SK-N-SH (cell line): ENCODE measurements at regions of chr20 and their contacts with region 1.

Region 1: DNA sequence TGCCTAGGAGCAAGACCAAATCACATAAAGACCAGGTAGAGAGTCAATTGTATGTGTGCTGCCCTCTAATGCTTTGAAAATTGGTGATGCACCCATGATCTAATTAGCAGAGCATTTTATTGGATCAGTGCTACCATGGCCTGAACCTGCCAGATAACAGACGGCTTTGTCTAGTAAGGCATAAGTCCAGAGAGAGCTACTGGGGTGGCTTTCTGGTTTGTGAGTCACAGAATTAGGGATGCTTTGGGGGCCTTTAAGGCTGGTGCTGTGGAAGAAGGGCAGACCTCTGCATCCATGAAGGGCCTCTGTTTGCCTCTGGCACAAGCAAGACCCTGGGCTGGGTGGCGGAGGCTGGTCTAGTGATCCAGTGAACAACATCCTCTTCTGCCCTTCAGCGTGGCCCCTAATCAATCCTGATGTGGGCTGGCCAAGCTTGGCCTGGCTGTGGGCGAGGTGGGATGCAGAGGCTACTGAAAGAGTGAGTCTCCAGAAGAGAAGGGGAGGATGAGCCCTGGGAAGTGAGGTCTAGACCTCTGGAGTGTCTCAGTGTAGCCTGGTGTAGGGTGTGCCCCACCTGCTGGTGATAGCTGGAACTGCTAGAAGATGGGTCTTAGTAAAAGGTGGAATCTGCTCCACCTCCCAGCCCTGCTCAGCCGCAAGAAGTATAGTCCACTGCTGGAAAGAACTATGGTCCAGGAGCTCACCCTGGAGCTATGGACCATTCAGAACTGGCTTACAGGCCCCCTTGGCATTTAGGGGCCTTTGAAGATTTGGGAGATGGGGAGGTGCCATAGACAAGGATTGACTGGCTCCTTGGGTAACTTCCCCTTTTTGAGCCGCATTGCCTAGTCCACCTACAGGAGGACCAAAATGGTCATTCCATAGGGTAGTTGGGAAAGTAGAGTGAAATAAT is 36.7 kb upstream of the AAR2 start:
- DNase-seq: peak; percentile 86
- H3K4me3 ChIP-seq: peak overlapping the region in 1 of 2 experiments; percentile 46; a peak in 1 of 4 replicates
- H3K27ac ChIP-seq: peak overlapping the region in 1 of 2 experiments; percentile 94; a peak in 2 of 4 replicates
- H3K4me1 ChIP-seq: peaks cover 0 to 19% of the 10 kb centered on the region in 2 experiments; a peak in 2 of 4 replicates
- H3K27me3 ChIP-seq: no peaks in the 10 kb centered on the region
- CTCF ChIP-seq: peak; percentile 83
- EP300 ChIP-seq: peak in 1 of 2 experiments; percentile 50; a peak in 1 of 4 replicates
- RAD21 ChIP-seq: peak; percentile 90

Region 2: GRCh38 chr20:35994994-35995453 is 204.6 kb before region 1 on chr20:
- CTCF ChIA-PET with region 1: interaction called, 28 read pairs
- POLR2A ChIA-PET with region 1: no interaction called
- DNase-seq: peak; percentile 79
- H3K4me3 ChIP-seq: peak overlapping the region in 1 of 2 experiments; percentile 34; a peak in 1 of 4 replicates
- H3K27ac ChIP-seq: no peak overlapping the region
- H3K4me1 ChIP-seq: no peaks in the 10 kb centered on the region
- H3K27me3 ChIP-seq: no peaks in the 10 kb centered on the region
- CTCF ChIP-seq: peak; percentile 98
- EP300 ChIP-seq: no peak
- RAD21 ChIP-seq: peak; percentile 91

Region 3: GRCh38 chr20:36153736-36154699 is 45.6 kb before region 1 on chr20:
- CTCF ChIA-PET with region 1: interaction called, 178 read pairs
- POLR2A ChIA-PET with region 1: interaction called, 3 read pairs
- DNase-seq: peak; percentile 98
- H3K4me3 ChIP-seq: peak overlapping the region; percentile 88 to 89
- H3K27ac ChIP-seq: peak overlapping the region; percentile 8 to 50; a peak in 2 of 4 replicates
- H3K4me1 ChIP-seq: peaks cover 0 to 31% of the 10 kb centered on the region in 2 experiments; a peak in 2 of 4 replicates
- H3K27me3 ChIP-seq: no peaks in the 10 kb centered on the region
- CTCF ChIP-seq: no peak
- EP300 ChIP-seq: no peak
- RAD21 ChIP-seq: no peak

Region 4: GRCh38 chr20:36173451-36173933 is 26.1 kb before region 1 on chr20:
- CTCF ChIA-PET with region 1: interaction called, 16 read pairs
- POLR2A ChIA-PET with region 1: no interaction called
- DNase-seq: peak; percentile 60
- H3K4me3 ChIP-seq: no peak overlapping the region
- H3K27ac ChIP-seq: no peak overlapping the region
- H3K4me1 ChIP-seq: peaks cover 8 to 21% of the 10 kb centered on the region in 2 experiments; a peak in 3 of 4 replicates
- H3K27me3 ChIP-seq: no peaks in the 10 kb centered on the region
- CTCF ChIP-seq: no peak
- EP300 ChIP-seq: no peak
- RAD21 ChIP-seq: no peak

Region 5: GRCh38 chr20:36214684-36215256 is 15.2 kb after region 1 on chr20:
- CTCF ChIA-PET with region 1: interaction called, 30 read pairs
- POLR2A ChIA-PET with region 1: no interaction called
- DNase-seq: peak; percentile 71
- H3K4me3 ChIP-seq: no peak overlapping the region; a peak in 1 of 4 replicates
- H3K27ac ChIP-seq: no peak overlapping the region
- H3K4me1 ChIP-seq: no peaks in the 10 kb centered on the region
- H3K27me3 ChIP-seq: no peaks in the 10 kb centered on the region
- CTCF ChIP-seq: peak; percentile 62
- EP300 ChIP-seq: no peak
- RAD21 ChIP-seq: peak; percentile 76

Region 6: GRCh38 chr20:36399147-36399968 is 199.8 kb after region 1 on chr20:
- CTCF ChIA-PET with region 1: interaction called, 12 read pairs
- POLR2A ChIA-PET with region 1: no interaction called
- DNase-seq: peak; percentile 81
- H3K4me3 ChIP-seq: no peak overlapping the region; a peak in 1 of 4 replicates
- H3K27ac ChIP-seq: no peak overlapping the region
- H3K4me1 ChIP-seq: peaks cover 0 to 12% of the 10 kb centered on the region in 2 experiments; a peak in 1 of 4 replicates
- H3K27me3 ChIP-seq: peaks cover 20% of the 10 kb centered on the region; the same call in 1 of the 2 replicates
- CTCF ChIP-seq: peak; percentile 51
- EP300 ChIP-seq: no peak
- RAD21 ChIP-seq: peak; percentile 72

Region 7: DNA sequence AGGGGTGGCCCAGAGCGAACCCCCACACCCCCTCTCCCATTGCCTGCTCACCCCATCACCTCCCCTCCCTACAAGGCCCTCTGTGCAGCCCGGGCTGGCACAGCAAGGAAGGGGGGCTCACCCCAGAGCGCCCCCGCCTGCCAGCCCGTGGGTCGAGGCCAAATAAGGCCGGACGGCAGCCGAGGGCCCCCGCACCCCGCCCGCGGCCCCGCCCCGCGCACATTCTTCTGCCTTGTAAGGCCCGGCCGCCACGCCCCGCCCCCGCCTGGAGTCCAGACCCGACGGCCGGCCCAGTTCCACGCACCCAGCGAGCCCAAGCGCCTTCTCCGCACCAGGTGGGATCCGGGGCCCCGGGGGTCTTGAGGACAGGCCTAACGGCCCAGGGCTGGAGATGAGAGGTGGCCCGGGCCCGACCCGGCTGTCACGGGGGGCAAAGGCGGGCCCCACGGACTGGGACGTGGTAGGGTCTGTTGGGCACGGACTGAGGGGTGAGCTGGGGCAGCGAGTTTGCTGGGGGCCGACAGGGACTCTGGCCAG is 341.7 kb after region 1 on chr20 and contains the start of gene MYL9:
- CTCF ChIA-PET with region 1: no interaction called
- POLR2A ChIA-PET with region 1: no interaction called
- DNase-seq: no peak
- H3K4me3 ChIP-seq: no peak within 1 kb of the TSS; a peak in 1 of 4 replicates
- H3K27ac ChIP-seq: no peak within 1 kb of the TSS
- H3K4me1 ChIP-seq: peaks cover 0 to 8% of the 10 kb centered on the region in 2 experiments; a peak in 2 of 4 replicates
- H3K27me3 ChIP-seq: no peaks in the 10 kb centered on the region
- CTCF ChIP-seq: no peak
- EP300 ChIP-seq: no peak
- RAD21 ChIP-seq: no peak
- polyA plus RNA-seq, gene MYL9: not detected in 2 replicates